WTC11 (cell line): ENCODE measurements at regions of chr13 and their contacts with region 1.

Region 1: DNA sequence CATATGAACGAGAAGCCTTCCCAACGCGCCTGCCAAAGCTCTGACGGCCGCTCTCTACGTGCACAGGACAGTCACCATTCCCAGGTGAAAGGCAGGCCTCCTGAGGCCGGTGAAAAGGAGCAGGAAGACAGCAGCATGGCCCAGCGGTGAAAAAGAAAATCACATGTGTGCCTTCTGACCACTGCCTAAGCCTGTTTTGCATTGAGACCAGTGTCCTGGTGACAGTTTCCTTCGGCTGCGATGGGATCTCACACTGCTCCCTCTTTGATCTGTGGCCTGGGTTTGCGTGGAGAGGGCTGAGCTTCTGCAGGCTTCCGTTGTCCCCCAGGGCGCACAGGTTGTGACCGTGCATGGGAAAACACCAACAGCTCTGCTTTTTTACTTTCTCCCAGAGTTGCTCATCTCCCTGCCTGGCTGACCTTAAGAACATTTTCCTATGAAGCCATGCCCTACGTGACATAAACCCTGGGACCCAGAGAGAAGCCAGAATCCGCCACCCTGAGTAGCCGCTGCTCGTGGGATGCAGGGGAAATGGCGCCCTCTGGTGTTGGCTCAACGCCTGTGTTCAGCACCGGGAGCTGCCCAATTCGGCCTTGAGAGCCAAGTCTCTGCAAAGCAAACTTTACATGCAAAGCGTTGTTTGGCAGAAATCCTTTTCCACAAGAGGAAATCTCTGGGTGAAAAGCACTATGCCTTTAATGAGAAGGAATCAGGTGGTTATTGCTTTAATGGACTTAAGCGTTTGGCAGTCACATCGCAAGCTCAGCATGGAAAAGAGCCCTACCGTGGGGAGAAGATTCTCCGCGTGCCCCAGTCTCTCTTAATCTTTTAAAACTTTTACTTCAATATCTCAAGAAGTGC is 112.2 kb upstream of the GPR12 start:
- DNase-seq: peak; percentile 88
- ATAC-seq: peak; percentile 92
- H3K4me3 Mint-ChIP-seq: no peak overlapping the region
- H3K27ac Mint-ChIP-seq: no peak overlapping the region
- H3K4me1 Mint-ChIP-seq: peaks cover 26% of the 10 kb centered on the region
- H3K27me3 Mint-ChIP-seq: 0 out of 2 replicates have a peak, but pooled peaks cover 2% of the 10 kb centered on the region
- CTCF ChIP-seq: peak; percentile 89

Region 2: DNA sequence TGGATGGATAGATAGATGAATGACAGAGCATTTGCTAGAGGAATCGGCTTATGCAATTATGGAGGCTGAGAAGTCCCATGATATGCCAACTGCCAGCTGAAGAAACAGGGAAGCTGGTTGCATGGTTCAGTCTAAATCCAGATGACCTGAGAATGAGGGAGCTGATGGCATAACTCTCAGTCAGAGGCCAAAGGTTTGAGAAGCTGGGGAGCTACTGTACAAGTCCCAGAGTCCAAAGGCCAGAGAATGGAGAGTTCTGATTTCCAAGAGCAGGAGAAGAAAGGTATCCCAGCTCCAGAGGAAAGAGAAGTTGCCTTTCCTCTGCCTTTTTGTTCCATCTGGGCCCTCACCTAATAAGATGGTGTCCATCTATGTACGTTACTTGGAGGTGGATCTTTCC is 510.5 kb before region 1 on chr13:
- CTCF ChIA-PET with region 1: no interaction called
- POLR2A ChIA-PET with region 1: no interaction called
- DNase-seq: no peak
- ATAC-seq: no peak
- H3K4me3 Mint-ChIP-seq: no peak overlapping the region
- H3K27ac Mint-ChIP-seq: no peak overlapping the region
- H3K4me1 Mint-ChIP-seq: no peaks in the 10 kb centered on the region
- H3K27me3 Mint-ChIP-seq: no peaks in the 10 kb centered on the region
- CTCF ChIP-seq: no peak

Region 3: DNA sequence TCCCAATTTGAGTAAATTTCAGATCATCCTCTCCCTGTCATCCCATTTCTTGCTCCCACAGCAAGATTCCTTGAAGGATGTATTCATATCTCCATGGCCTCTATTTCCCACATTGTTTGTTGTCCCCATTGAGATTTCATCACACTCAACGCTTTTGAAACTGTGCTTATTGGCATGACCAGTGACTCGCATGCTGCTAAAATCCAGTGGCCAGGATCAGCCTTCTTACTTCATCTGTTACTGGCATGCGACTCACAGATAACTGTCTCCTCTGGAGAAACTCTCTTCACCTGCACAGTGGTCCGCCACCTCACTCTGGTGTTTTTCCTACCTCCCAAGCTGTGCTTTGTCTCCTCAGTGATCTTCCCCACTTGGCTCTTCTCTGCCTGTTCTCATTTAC is 219.4 kb before region 1 on chr13:
- CTCF ChIA-PET with region 1: no interaction called
- POLR2A ChIA-PET with region 1: no interaction called
- DNase-seq: no peak
- ATAC-seq: no peak
- H3K4me3 Mint-ChIP-seq: no peak overlapping the region
- H3K27ac Mint-ChIP-seq: no peak overlapping the region
- H3K4me1 Mint-ChIP-seq: peaks cover under 1% of the 10 kb centered on the region
- H3K27me3 Mint-ChIP-seq: no peaks in the 10 kb centered on the region
- CTCF ChIP-seq: no peak

Region 4: GRCh38 chr13:26707122-26708006 is 165.4 kb before region 1 on chr13:
- CTCF ChIA-PET with region 1: interaction called, 107 read pairs
- POLR2A ChIA-PET with region 1: no interaction called
- DNase-seq: peak; percentile 71
- ATAC-seq: peak; percentile 87
- H3K4me3 Mint-ChIP-seq: no peak overlapping the region
- H3K27ac Mint-ChIP-seq: no peak overlapping the region
- H3K4me1 Mint-ChIP-seq: peaks cover 21% of the 10 kb centered on the region
- H3K27me3 Mint-ChIP-seq: peaks cover 1% of the 10 kb centered on the region
- CTCF ChIP-seq: no peak

Region 5: DNA sequence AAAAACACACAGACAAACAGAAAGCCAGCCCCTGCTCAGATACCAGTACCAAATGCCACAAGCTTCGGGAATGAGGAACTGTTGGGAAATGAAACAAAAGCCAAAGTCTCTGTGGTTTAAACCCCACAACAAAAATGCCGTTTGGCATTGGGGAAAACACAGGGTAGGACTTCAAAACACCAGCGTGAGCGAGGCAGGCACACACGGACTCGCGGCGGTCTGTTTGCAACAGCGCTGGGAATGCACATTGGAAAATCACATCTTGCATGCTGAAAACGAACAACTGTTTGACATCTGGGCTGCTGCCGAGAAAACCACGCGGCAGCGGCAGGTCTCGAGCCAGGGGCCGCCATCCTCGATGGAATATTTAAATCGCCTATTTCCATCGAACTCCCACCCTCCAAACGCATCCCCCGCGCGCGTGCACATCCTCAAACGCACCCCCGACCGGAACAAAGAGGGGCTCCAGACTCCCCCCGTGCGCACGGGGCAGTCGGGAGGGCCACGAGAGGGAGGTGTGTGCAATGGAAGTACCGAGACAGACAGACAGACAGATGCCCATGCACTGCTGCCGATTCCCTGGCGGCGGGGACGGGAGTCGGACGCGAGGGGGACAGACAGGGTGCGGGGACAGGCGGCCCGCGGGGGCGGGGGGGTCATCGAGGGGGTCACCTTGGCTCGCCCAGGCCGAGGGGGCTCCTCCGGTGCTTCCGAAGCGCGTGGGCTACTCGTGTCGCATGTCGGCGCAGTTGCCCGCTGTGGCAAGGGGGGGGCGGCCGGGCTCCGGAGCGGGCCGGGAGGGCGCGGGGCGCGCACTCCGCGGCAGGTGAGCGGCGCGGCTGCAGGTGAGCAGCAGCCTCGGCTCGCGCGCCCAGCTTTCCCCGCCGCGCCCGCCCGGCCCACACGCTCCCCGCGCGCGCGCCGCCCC is 112.6 kb before region 1 on chr13 and contains the start of gene GPR12:
- CTCF ChIA-PET with region 1: interaction called, 13 read pairs
- POLR2A ChIA-PET with region 1: no interaction called
- DNase-seq: peak; percentile 16
- ATAC-seq: peak; percentile 65
- H3K4me3 Mint-ChIP-seq: peak within 1 kb of the TSS; percentile 81
- H3K27ac Mint-ChIP-seq: no peak within 1 kb of the TSS
- H3K4me1 Mint-ChIP-seq: peaks cover 9% of the 10 kb centered on the region; the same call in 1 of the 2 replicates
- H3K27me3 Mint-ChIP-seq: peaks cover 61% of the 10 kb centered on the region
- CTCF ChIP-seq: no peak
- total RNA-seq, gene GPR12: 0.07 to 0.09 TPM in 2 of 3 replicates, not detected in the other

Region 6: DNA sequence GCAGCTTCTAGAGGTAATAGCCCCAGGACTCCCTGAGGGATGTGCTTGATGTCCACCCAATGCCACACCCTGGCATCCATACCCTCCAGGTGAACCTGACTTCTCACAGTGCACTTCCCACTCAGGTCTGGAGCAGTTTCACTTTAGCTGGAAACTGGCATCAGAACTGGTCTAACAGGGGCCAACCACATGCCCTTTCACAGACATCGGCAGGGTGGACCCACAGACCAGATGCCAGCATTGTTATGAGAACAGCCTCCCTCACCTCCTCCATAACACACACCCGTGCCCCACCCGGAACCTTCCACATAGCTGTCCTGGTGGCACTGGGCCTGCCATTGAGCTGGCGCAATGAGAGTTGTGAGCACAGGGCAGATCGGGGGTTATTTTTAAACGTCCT is 34.8 kb before region 1 on chr13:
- CTCF ChIA-PET with region 1: interaction called, 13 read pairs
- POLR2A ChIA-PET with region 1: no interaction called
- DNase-seq: no peak
- ATAC-seq: no peak
- H3K4me3 Mint-ChIP-seq: no peak overlapping the region
- H3K27ac Mint-ChIP-seq: no peak overlapping the region
- H3K4me1 Mint-ChIP-seq: peaks cover 21% of the 10 kb centered on the region
- H3K27me3 Mint-ChIP-seq: no peaks in the 10 kb centered on the region
- CTCF ChIP-seq: no peak

Region 7: GRCh38 chr13:26861941-26862340 is 10.8 kb before region 1 on chr13:
- CTCF ChIA-PET with region 1: interaction called, 18 read pairs
- POLR2A ChIA-PET with region 1: interaction called, 3 read pairs
- DNase-seq: no peak
- ATAC-seq: no peak
- H3K4me3 Mint-ChIP-seq: no peak overlapping the region
- H3K27ac Mint-ChIP-seq: no peak overlapping the region
- H3K4me1 Mint-ChIP-seq: no peaks in the 10 kb centered on the region
- H3K27me3 Mint-ChIP-seq: no peaks in the 10 kb centered on the region; the same call in 1 of the 2 replicates
- CTCF ChIP-seq: no peak

Region 8: DNA sequence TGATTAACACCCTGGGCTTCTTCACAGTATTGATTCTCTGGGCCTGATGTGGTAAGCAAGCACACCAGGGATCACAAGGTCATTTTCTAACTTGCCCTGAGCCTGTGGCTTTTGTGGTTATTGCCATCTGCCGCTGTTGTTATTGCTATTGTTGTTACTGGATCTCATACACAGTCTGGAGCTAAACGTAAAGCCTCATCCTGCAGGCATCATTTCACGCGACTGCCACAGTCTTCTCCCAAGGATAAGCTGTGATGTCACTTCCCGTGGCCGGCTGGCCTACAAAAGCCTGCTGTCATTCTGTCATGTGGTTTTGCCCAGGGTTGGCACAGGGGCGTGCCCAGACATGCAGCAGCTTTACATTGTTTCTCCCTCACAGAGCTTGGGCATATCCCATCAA is 41.9 kb after region 1 on chr13:
- CTCF ChIA-PET with region 1: interaction called, 14 read pairs
- POLR2A ChIA-PET with region 1: no interaction called
- DNase-seq: no peak
- ATAC-seq: no peak
- H3K4me3 Mint-ChIP-seq: no peak overlapping the region
- H3K27ac Mint-ChIP-seq: no peak overlapping the region
- H3K4me1 Mint-ChIP-seq: peaks cover 4% of the 10 kb centered on the region; the same call in 1 of the 2 replicates
- H3K27me3 Mint-ChIP-seq: no peaks in the 10 kb centered on the region
- CTCF ChIP-seq: no peak

Region 9: DNA sequence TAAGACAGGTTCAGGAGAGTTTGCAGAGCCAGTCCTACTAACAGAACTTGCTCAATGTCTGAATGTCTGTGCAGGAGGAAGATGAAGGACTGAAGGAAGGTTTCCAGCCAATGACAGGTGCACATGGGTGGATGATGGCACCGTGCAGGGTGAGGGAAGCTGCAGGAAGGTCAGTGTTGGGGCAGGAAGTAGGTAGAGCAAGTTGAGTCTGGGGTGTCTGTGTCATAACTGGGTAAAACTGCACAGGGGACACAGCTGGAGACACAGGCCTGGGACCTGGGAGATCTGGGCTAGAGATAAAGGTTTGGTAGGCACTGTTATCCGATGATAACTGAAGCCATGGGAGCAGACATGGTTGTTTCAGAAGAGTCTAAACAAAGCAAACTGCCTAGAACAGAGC is 182.0 kb after region 1 on chr13:
- CTCF ChIA-PET with region 1: no interaction called
- POLR2A ChIA-PET with region 1: no interaction called
- DNase-seq: no peak
- ATAC-seq: no peak
- H3K4me3 Mint-ChIP-seq: no peak overlapping the region
- H3K27ac Mint-ChIP-seq: no peak overlapping the region
- H3K4me1 Mint-ChIP-seq: peaks cover 6% of the 10 kb centered on the region
- H3K27me3 Mint-ChIP-seq: no peaks in the 10 kb centered on the region
- CTCF ChIP-seq: no peak